ENCODE measurements at regions of chr1 and their contacts with region 1.

Region 1: DNA sequence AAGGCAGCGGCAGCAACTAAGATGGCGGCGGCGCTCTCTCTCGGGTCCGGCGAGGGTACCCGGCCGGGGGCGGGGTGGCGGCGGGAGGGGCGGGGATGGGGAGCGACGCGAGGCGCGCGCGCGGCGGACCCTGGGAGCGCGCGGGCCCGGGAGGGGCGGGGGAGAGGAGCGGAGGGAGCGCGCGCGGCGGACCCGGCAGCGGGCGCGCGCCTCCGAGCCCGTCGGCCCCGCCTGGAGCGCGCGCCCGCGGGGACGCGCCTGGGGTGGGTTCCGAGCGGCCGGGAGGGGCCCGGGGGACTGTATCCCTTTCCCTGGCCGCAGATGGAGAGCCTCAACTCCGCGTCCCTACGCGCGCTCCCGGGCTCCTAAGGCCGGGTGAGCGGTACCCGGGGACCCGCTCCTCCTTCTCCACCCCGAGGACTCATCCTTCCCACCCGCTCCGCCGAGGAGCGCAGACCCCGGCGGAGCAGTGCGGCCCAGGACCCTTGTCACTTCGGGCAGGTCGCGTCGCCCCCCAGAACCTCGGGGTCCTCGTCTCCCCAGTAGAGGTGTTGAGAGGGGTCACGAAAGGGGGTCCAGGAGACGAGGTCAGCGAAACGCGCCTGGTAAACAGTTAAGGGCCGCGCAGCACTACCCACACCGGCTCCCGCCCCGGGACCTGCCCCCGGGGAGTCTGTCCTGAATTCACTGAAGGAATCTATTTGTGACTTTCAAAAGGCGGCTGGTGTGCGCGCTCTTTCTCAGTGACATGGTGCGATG is at the start of gene CLSTN1:
- DNase-seq: peak; percentile 90
- ATAC-seq: peak; percentile 79
- H3K4me3 ChIP-seq: peak within 1 kb of the TSS; percentile 71 to 86 (median 77)
- H3K4me3 Mint-ChIP-seq: peak within 1 kb of the TSS; percentile 95
- H3K27ac ChIP-seq: peak within 1 kb of the TSS; percentile 47 to 73
- H3K27ac Mint-ChIP-seq: peak within 1 kb of the TSS; percentile 94
- H3K4me1 ChIP-seq: peaks cover 38 to 39% of the 10 kb centered on the region in 2 donors
- H3K4me1 Mint-ChIP-seq: peaks cover 41% of the 10 kb centered on the region
- H3K27me3 ChIP-seq: no peaks in the 10 kb centered on the region
- H3K27me3 Mint-ChIP-seq: no peaks in the 10 kb centered on the region
- CTCF ChIP-seq: no peak
- total RNA-seq, gene CLSTN1: 75.8 and 81.4 TPM in 2 replicates

Region 2: DNA sequence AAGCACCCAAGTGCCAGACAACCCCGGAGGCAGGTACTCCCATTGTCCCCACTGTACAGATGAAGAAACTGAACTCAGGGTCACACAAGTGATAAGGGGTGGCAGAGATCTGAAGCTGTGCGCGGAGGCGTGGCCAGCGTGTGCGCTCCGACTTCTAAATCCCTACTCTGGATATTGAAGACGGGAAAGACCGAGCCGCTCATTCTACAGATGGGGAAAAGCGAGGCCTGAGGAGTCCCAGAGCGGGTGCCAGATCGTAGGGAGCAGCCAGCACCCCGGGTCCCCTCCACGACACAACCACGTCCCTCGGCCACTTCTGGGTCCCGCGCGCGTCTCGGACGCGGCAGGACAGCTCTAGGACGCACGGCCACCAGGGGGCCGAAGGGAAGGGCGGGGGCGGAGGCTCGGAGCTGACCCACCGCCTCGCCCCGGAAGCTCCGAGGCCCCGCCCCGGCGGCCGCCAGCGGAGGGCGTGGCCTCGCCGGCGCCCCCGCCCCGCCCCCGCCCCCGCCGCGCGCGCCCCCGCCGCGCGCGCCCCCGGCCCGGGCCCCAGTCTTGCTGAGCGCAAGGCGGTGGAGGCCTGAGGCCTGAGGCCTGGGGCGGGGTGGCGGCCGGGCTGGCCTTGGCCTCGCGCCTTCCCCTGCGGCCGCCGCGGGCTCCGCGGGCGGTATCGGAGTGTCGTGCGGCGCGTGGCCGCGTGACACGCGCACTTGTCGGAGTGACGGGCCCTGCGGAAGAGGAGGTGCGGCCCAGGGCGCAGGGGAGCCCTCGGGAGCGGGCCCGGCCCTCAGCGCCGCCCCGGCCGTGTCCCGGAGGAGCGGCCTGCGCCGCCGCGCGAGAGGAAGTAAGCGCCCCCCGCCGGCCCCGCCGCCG is 589.7 kb before region 1 on chr1 and contains the start of gene H6PD:
- CTCF ChIA-PET with region 1: no interaction called
- POLR2A ChIA-PET with region 1: no interaction called
- intact Hi-C with region 1: loop called (anchors 2 kb)
- DNase-seq: peak; percentile 92
- ATAC-seq: peak; percentile 83
- H3K4me3 ChIP-seq: peak within 1 kb of the TSS; percentile 55 to 80 (median 73)
- H3K4me3 Mint-ChIP-seq: peak within 1 kb of the TSS; percentile 96
- H3K27ac ChIP-seq: peak within 1 kb of the TSS; percentile 79 to 88
- H3K27ac Mint-ChIP-seq: peak within 1 kb of the TSS; percentile 96
- H3K4me1 ChIP-seq: peaks cover 19 to 36% of the 10 kb centered on the region in 2 donors
- H3K4me1 Mint-ChIP-seq: peaks cover 41% of the 10 kb centered on the region
- H3K27me3 ChIP-seq: no peaks in the 10 kb centered on the region
- H3K27me3 Mint-ChIP-seq: no peaks in the 10 kb centered on the region
- CTCF ChIP-seq: peak; percentile 63
- total RNA-seq, gene H6PD: 30.2 and 31.4 TPM in 2 replicates

Region 3: DNA sequence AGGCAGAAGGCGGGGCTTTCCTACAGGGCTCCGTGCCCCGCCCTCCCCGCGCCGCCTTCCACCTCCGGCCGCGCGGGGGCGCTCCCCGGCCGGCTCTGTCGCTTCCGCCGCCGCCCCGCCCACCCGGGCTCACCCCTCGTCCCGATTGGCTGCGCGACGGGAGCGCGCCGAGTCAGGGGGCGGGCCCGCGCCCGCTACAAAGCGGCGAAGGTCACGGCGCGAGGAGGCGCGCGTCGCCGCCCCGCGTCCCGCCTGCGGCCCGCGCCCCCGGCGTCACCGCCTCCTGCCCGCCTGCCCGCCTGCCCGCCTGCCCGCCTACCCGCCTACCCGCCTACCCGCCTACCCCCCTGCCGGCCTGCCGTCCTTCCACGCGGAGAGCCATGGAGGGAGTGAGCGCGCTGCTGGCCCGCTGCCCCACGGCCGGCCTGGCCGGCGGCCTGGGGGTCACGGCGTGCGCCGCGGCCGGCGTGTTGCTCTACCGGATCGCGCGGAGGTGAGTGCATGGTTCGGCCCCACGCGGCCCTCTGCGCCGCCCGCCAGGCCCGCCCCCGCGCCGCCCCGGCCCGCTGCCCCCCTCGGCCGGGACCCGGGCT is 235.5 kb before region 1 on chr1 and contains the start of gene TMEM201:
- CTCF ChIA-PET with region 1: no interaction called
- POLR2A ChIA-PET with region 1: no interaction called
- intact Hi-C with region 1: loop called (anchors 1 kb)
- DNase-seq: peak; percentile 96
- ATAC-seq: peak; percentile 91
- H3K4me3 ChIP-seq: peak within 1 kb of the TSS; percentile 33 to 62 (median 58)
- H3K4me3 Mint-ChIP-seq: peak within 1 kb of the TSS; percentile 91
- H3K27ac ChIP-seq: peak within 1 kb of the TSS in 1 of 2 donors; percentile 6
- H3K27ac Mint-ChIP-seq: peak within 1 kb of the TSS; percentile 82
- H3K4me1 ChIP-seq: peaks cover 33 to 42% of the 10 kb centered on the region in 2 donors
- H3K4me1 Mint-ChIP-seq: peaks cover 38% of the 10 kb centered on the region
- H3K27me3 ChIP-seq: no peaks in the 10 kb centered on the region
- H3K27me3 Mint-ChIP-seq: no peaks in the 10 kb centered on the region
- CTCF ChIP-seq: peak; percentile 80
- total RNA-seq, gene TMEM201: 9.1 and 11.2 TPM in 2 replicates

Region 4: DNA sequence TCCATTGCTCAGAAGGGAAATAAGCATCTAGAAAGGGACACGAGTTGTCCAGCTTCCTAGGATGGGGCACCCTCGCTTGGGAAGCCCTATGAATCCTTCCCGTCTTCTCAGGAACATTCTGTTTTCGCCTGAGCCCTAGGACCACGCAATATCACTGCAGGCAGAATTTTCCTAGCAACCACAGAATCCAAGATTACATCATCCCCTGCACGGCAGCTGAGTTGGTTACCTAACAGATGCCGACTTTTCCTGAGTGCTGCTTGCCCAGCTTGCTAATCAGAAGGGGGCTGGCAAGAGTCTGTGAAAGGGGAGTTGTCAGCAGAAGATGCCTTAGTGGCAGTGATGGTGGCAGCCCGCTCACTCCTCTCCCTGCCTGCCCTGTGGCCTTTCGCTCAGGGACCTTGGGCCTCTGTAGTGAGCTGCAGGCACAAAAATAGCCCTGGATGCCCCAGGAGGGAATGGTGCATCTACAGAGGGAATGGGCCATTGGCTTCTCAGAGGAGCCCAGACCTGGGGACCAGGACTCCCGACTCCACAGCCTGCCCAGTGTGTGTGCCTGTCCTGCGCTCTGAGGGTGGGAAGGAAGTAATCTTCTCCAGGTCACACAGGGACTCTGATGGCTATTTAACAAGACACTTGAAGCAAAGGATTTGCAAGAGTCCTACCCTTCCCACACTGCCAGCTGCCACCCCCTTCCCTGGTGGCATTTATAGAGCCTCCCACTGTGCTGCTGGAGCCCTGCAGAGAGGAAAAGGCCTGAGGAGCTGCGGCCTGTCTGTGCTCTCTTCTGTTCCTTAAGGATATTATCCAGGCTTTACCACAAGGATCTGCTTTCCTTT is 28.5 kb after region 1 on chr1:
- CTCF ChIA-PET with region 1: interaction called, 4 read pairs
- POLR2A ChIA-PET with region 1: interaction called, 4 read pairs
- intact Hi-C with region 1: loop called (anchors 1 kb)
- DNase-seq: no peak
- ATAC-seq: no peak
- H3K4me3 ChIP-seq: no peak overlapping the region
- H3K4me3 Mint-ChIP-seq: no peak overlapping the region
- H3K27ac ChIP-seq: no peak overlapping the region
- H3K27ac Mint-ChIP-seq: no peak overlapping the region
- H3K4me1 ChIP-seq: peaks cover 21 to 36% of the 10 kb centered on the region in 2 donors
- H3K4me1 Mint-ChIP-seq: peaks cover 26% of the 10 kb centered on the region
- H3K27me3 ChIP-seq: no peaks in the 10 kb centered on the region
- H3K27me3 Mint-ChIP-seq: no peaks in the 10 kb centered on the region
- CTCF ChIP-seq: no peak

Region 5: DNA sequence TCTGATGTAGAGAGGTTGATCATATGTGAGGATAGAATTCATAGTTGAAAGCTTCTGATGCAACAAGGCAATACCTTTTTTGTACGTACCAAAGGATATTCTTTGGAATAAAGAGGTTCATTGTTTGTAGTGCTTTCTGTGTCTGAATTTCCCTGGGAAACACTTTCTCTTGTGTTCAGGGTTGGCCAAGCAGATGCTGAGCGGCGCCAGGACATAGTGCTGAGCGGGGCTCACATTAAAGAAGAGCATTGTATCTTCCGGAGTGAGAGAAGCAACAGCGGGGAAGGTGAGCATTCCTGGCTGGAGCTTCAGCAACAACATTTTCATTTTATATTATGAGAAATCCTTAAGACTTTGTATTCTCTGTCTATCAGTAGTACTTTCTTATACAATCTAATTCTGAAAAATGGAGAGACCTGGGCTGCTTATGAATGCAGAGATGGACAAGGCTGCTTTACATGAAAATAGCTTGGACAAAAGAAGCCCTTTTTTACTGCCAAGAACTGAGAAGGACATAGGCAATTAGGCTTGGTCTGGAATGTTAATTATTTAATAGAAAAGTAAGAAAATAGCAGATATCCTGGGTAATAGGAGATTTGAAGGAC is 471.5 kb after region 1 on chr1:
- CTCF ChIA-PET with region 1: no interaction called
- POLR2A ChIA-PET with region 1: no interaction called
- intact Hi-C with region 1: no loop called
- DNase-seq: no peak
- ATAC-seq: no peak
- H3K4me3 ChIP-seq: no peak overlapping the region
- H3K4me3 Mint-ChIP-seq: no peak overlapping the region
- H3K27ac ChIP-seq: no peak overlapping the region
- H3K27ac Mint-ChIP-seq: no peak overlapping the region
- H3K4me1 ChIP-seq: peaks cover 0 to 2% of the 10 kb centered on the region in 2 donors
- H3K4me1 Mint-ChIP-seq: peaks cover 3% of the 10 kb centered on the region
- H3K27me3 ChIP-seq: no peaks in the 10 kb centered on the region
- H3K27me3 Mint-ChIP-seq: no peaks in the 10 kb centered on the region
- CTCF ChIP-seq: no peak

Region 6: GRCh38 chr1:10694633-10695627 is 870.8 kb after region 1 on chr1:
- CTCF ChIA-PET with region 1: no interaction called
- POLR2A ChIA-PET with region 1: no interaction called
- intact Hi-C with region 1: loop called (anchors 2 kb)
- DNase-seq: peak; percentile 92
- ATAC-seq: peak; percentile 73
- H3K4me3 ChIP-seq: peak overlapping the region in 4 of 5 experiments; percentile 24 to 63 (median 50)
- H3K4me3 Mint-ChIP-seq: peak overlapping the region; percentile 87
- H3K27ac ChIP-seq: peak overlapping the region in 1 of 2 donors; percentile 68
- H3K27ac Mint-ChIP-seq: peak overlapping the region; percentile 85
- H3K4me1 ChIP-seq: peaks cover 16 to 24% of the 10 kb centered on the region in 2 donors
- H3K4me1 Mint-ChIP-seq: peaks cover 19% of the 10 kb centered on the region
- H3K27me3 ChIP-seq: no peaks in the 10 kb centered on the region
- H3K27me3 Mint-ChIP-seq: peaks cover 8% of the 10 kb centered on the region
- CTCF ChIP-seq: no peak